ENCODE measurements at regions of chr2 and their contacts with region 1.

Region 1: DNA sequence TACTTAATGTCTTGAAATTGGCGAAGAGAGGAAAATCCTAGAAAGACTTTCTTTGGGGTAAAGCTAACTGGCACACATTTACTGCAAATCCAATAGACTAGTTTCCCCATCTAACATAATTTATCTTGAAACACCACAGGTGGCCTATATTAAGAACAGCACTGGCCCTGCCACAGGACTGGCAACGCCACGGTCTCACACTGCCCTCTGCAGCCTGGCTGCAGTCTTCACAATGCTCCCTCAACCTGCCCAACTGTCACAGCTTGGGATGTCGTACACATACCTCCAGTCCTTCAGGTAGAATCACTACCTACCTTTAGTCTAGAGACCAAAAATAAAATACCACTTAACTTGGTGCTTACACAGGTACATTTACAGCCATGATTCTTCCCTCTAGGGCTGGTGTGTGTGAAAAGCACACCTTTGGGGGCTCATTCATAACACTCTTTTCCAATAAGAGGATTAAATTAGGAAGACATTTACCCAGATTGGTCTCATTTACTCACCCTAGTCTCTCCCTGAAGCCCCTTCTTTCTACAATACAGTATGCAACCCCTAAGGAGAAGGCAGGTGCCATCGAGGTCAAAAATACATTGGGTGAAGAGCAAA is 222.2 kb downstream of the C1D start:
- DNase-seq: peak; percentile 42
- ATAC-seq: peak; percentile 99
- H3K4me3 ChIP-seq: no peak overlapping the region
- H3K27ac ChIP-seq: no peak overlapping the region
- H3K4me1 ChIP-seq: no peaks in the 10 kb centered on the region
- H3K27me3 ChIP-seq: peaks cover 6% of the 10 kb centered on the region
- CTCF ChIP-seq: peak; percentile 86

Region 2: DNA sequence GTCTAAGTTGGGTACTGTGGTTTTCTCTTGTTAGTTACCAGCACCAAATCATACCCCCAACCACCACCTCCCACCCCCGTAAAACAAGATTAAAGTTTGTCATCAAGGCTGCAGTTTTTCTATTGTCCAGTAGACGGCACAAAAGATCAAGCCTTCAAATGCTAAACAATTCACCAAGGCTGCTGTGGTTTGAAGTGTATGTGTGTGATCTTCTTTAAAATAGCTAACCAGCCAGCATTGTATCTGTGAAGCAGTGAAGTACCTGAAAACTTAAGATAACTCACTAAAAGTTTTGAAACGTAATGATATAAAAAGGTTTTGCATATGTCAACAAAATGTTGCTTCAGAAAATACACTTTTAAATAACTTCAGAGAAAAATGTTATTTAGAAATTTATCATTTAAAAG is 1411.5 kb before region 1 on chr2:
- CTCF ChIA-PET with region 1: no interaction called
- POLR2A ChIA-PET with region 1: no interaction called
- in situ Hi-C with region 1: no loop called
- intact Hi-C with region 1: loop called (anchors 5 kb)
- DNase-seq: peak; percentile 53
- ATAC-seq: no peak
- H3K4me3 ChIP-seq: no peak overlapping the region
- H3K27ac ChIP-seq: no peak overlapping the region
- H3K4me1 ChIP-seq: no peaks in the 10 kb centered on the region; the same call in none of the 2 replicates
- H3K27me3 ChIP-seq: peaks cover 24% of the 10 kb centered on the region
- CTCF ChIP-seq: peak; percentile 92

Region 3: DNA sequence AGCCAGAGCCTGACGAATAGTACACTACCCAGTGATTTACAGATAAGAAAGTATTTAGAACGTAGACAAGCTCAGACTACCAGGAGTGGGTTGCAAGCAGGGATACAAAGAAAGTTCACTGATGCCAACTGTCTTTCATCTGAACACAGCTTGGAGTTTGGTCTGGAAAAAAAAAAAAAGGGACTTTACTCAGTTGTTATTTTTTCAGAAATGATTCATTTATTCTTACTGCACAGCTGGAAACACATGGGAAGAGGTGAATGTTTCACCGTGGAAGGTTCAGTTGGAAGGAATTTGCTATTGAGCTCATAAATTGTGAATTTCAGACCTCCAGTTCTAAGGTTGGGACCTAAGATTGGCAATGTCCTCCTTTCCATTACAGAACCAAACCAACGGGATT is 183.7 kb before region 1 on chr2:
- CTCF ChIA-PET with region 1: no interaction called
- POLR2A ChIA-PET with region 1: no interaction called
- in situ Hi-C with region 1: no loop called
- intact Hi-C with region 1: no loop called
- DNase-seq: no peak
- ATAC-seq: no peak
- H3K4me3 ChIP-seq: no peak overlapping the region
- H3K27ac ChIP-seq: no peak overlapping the region
- H3K4me1 ChIP-seq: no peaks in the 10 kb centered on the region
- H3K27me3 ChIP-seq: no peaks in the 10 kb centered on the region
- CTCF ChIP-seq: no peak

Region 4: GRCh38 chr2:67733517-67733916 is 107.0 kb before region 1 on chr2:
- CTCF ChIA-PET with region 1: interaction called, 5 read pairs
- POLR2A ChIA-PET with region 1: no interaction called
- in situ Hi-C with region 1: no loop called
- intact Hi-C with region 1: loop called (anchors 5 kb)
- DNase-seq: no peak
- ATAC-seq: 0 out of 2 replicates have a peak, but pooled peaks have one; percentile 65
- H3K4me3 ChIP-seq: no peak overlapping the region
- H3K27ac ChIP-seq: no peak overlapping the region
- H3K4me1 ChIP-seq: no peaks in the 10 kb centered on the region
- H3K27me3 ChIP-seq: peaks cover 2% of the 10 kb centered on the region; the same call in 1 of the 2 replicates
- CTCF ChIP-seq: peak; percentile 53

Region 5: GRCh38 chr2:68031542-68032160 is 191.1 kb after region 1 on chr2:
- CTCF ChIA-PET with region 1: interaction called, 3 read pairs
- POLR2A ChIA-PET with region 1: no interaction called
- in situ Hi-C with region 1: no loop called
- intact Hi-C with region 1: loop called (anchors 5 kb)
- DNase-seq: peak; percentile 25
- ATAC-seq: peak; percentile 66; the same call in 1 of the 2 replicates
- H3K4me3 ChIP-seq: no peak overlapping the region
- H3K27ac ChIP-seq: no peak overlapping the region
- H3K4me1 ChIP-seq: no peaks in the 10 kb centered on the region
- H3K27me3 ChIP-seq: no peaks in the 10 kb centered on the region; the same call in 1 of the 2 replicates
- CTCF ChIP-seq: peak; percentile 69; the same call in 1 of the 2 replicates

Measured in Panc1 (cell line).